CD4-positive, alpha-beta T cell (primary cell): ENCODE measurements at regions of chr3 and their contacts with region 1.

Region 1: GRCh38 chr3:55500555-55501330 is 13.6 kb upstream of the WNT5A start:
- DNase-seq: no peak
- ATAC-seq: no peak
- H3K4me3 ChIP-seq: no peak overlapping the region
- H3K4me3 Mint-ChIP-seq: no peak overlapping the region
- H3K27ac ChIP-seq: no peak overlapping the region
- H3K27ac Mint-ChIP-seq: no peak overlapping the region
- H3K4me1 ChIP-seq: no peaks in the 10 kb centered on the region
- H3K4me1 Mint-ChIP-seq: no peaks in the 10 kb centered on the region
- H3K27me3 ChIP-seq: no peaks in the 10 kb centered on the region
- H3K27me3 Mint-ChIP-seq: no peaks in the 10 kb centered on the region
- CTCF ChIP-seq: no peak

Region 2: DNA sequence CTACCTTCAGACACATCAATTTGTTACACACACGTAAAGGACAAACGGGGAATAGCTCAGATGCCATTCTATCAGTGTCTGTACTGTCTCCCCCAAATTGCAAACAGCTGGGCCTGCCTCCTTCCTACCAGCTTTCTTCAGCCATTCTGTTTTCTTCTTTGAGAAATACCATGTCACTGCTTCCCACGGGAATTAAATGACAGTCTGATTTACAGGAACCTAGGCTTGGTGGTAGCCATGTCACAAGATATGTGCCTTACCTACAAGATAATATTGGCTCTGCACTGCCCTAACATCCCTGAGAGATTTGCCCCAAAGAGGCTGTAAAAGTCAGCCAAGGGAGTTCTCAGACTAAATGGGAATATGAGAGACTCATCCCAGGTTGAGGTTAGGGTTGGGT is 881.2 kb before region 1 on chr3:
- CTCF ChIA-PET with region 1: no interaction called
- POLR2A ChIA-PET with region 1: no interaction called
- intact Hi-C with region 1: loop called in 1 of 2 experiments (anchors 5 kb)
- DNase-seq: no peak
- ATAC-seq: no peak
- H3K4me3 ChIP-seq: no peak overlapping the region
- H3K4me3 Mint-ChIP-seq: no peak overlapping the region
- H3K27ac ChIP-seq: no peak overlapping the region
- H3K27ac Mint-ChIP-seq: no peak overlapping the region
- H3K4me1 ChIP-seq: no peaks in the 10 kb centered on the region
- H3K4me1 Mint-ChIP-seq: no peaks in the 10 kb centered on the region
- H3K27me3 ChIP-seq: no peaks in the 10 kb centered on the region
- H3K27me3 Mint-ChIP-seq: no peaks in the 10 kb centered on the region
- CTCF ChIP-seq: no peak

Region 3: GRCh38 chr3:55624238-55624637 is 123.5 kb after region 1 on chr3:
- CTCF ChIA-PET with region 1: no interaction called
- POLR2A ChIA-PET with region 1: no interaction called
- intact Hi-C with region 1: no loop called
- DNase-seq: peak in 3 of 14 experiments; percentile 8 to 76 (median 66)
- ATAC-seq: no peak
- H3K4me3 ChIP-seq: no peak overlapping the region
- H3K4me3 Mint-ChIP-seq: no peak overlapping the region
- H3K27ac ChIP-seq: no peak overlapping the region
- H3K27ac Mint-ChIP-seq: no peak overlapping the region
- H3K4me1 ChIP-seq: no peaks in the 10 kb centered on the region
- H3K4me1 Mint-ChIP-seq: no peaks in the 10 kb centered on the region
- H3K27me3 ChIP-seq: no peaks in the 10 kb centered on the region
- H3K27me3 Mint-ChIP-seq: peaks cover 4% of the 10 kb centered on the region
- CTCF ChIP-seq: no peak

Region 4: DNA sequence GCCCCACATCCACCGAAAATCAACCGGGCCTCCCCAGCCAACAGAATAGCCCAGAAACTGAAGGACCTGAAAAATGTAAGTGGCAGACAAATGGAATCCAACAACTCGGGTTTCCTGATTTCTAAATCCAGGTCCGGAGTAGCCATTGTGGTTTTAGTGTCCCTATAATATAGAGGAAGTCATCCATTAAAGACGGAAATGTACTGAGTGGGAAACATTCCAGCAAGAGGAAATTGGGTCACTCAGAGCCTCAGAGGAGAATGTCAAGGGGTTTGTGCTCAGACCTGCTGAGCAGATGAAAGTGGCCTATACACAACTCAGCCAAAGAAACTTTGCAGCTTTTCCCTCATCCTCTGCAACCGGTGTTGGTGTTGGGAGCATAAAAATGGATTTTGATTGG is 600.8 kb after region 1 on chr3:
- CTCF ChIA-PET with region 1: no interaction called
- POLR2A ChIA-PET with region 1: no interaction called
- intact Hi-C with region 1: no loop called
- DNase-seq: no peak
- ATAC-seq: no peak
- H3K4me3 ChIP-seq: no peak overlapping the region
- H3K4me3 Mint-ChIP-seq: no peak overlapping the region
- H3K27ac ChIP-seq: no peak overlapping the region
- H3K27ac Mint-ChIP-seq: no peak overlapping the region
- H3K4me1 ChIP-seq: no peaks in the 10 kb centered on the region
- H3K4me1 Mint-ChIP-seq: no peaks in the 10 kb centered on the region
- H3K27me3 ChIP-seq: peaks cover 0 to 2% of the 10 kb centered on the region in 2 experiments
- H3K27me3 Mint-ChIP-seq: peaks cover 11% of the 10 kb centered on the region
- CTCF ChIP-seq: no peak